ENCODE measurements at regions of chr9 and their contacts with region 1.

Region 1: DNA sequence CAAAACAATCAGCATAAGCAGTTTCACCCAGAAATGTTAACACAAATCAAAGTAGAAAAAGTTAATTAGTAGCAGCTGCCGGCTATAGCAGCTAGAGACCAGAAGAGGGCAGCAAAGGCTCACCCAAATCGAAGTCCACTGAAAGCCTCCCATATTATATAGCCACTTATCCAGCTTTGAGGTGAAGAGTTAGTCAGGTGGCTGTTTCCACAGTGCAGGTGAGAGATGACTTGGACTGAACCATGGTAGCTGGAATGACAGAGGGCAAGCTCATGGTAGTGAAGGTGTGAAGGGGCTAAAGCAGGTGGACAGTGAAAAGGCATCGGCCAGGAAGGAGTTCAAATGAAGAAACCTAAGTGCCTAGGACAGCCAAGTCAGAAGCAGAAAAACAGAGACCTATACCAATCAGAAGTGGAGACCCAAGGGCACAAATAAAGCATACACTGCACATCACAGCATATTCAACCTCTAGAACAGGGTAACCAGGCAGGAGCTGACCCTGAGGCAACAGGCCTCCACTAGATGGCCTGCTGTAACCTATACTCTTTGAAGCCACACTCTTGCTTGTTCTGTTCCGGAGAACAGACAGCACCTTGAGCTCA is 7.2 kb upstream of the RNF38 start:
- DNase-seq: no peak
- ATAC-seq: peak; percentile 98
- H3K4me3 ChIP-seq: no peak overlapping the region
- H3K27ac ChIP-seq: no peak overlapping the region
- H3K4me1 ChIP-seq: peaks cover 4% of the 10 kb centered on the region
- H3K27me3 ChIP-seq: no peaks in the 10 kb centered on the region
- CTCF ChIP-seq: peak; percentile 95

Region 2: DNA sequence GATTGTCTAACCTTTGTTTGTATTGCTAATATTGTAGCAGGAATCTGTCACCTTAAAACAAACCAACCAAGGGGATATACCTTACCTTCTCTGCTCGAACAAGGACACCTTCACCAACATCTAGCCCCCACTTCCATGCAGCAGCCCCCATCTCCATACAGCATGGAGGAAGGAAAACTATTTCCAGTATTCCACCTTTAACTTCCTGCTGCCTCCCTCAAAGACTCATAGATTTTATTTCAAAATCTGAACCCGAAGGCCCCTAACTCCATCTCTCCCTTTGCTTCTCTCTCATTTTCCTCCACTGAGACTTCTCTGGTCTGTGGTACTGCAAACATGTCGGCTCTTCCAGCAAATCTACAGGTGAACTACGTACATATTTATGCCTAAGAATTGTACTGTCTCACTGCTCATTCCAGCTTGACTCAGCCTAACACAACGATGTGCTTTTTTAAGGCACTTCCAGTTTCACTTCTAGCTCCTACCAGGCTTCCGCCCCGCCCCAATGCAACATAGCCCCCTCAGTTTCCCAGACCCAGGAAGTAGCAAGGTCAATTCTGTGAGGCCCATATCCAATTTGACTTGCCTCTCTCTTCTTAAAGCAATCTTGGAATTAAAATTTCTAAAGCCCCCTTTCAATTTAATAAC is 63.5 kb after region 1 on chr9:
- intact Hi-C with region 1: no loop called
- DNase-seq: peak; percentile 80
- ATAC-seq: peak; percentile 98
- H3K4me3 ChIP-seq: peak overlapping the region; percentile 50
- H3K27ac ChIP-seq: peak overlapping the region; percentile 90
- H3K4me1 ChIP-seq: peaks cover 23% of the 10 kb centered on the region
- H3K27me3 ChIP-seq: no peaks in the 10 kb centered on the region
- CTCF ChIP-seq: no peak

Region 3: DNA sequence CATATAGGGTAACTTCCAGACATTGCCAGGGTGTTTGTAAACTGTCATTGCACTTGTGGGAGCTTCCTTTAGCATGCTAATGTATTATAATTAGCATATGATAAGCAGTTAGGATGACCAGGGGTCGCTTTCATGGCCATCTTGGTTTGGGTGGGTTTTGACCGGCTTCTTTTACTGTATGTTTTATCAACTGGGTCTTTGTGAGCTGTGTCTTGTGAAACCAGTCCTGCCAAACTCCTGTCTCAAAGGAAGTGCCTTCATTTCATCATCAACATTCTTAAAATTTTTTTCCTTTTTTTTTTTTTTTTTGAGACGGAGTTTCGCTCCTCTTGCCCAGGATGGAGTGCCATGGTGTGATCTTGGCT is 153.6 kb after region 1 on chr9:
- intact Hi-C with region 1: loop called (anchors 5 kb)
- DNase-seq: no peak
- ATAC-seq: peak; percentile 22
- H3K4me3 ChIP-seq: no peak overlapping the region
- H3K27ac ChIP-seq: no peak overlapping the region
- H3K4me1 ChIP-seq: no peaks in the 10 kb centered on the region
- H3K27me3 ChIP-seq: no peaks in the 10 kb centered on the region
- CTCF ChIP-seq: no peak

Measured in upper lobe of right lung (tissue), 1 donor.